Thyroid gland (tissue), 4 donors: ENCODE measurements at regions of chr11 and their contacts with region 1.

Region 1: GRCh38 chr11:102007567-102008437 is 39.4 kb upstream of the CFAP300 start:
- DNase-seq: peak; percentile 57 to 58
- H3K4me3 ChIP-seq: no peak overlapping the region
- H3K27ac ChIP-seq: peak overlapping the region; percentile 47 to 69 (median 57)
- H3K4me1 ChIP-seq: peaks cover 3 to 18% of the 10 kb centered on the region in 2 donors
- H3K27me3 ChIP-seq: no peaks in the 10 kb centered on the region
- CTCF ChIP-seq: peak in 5 of 6 experiments; percentile 19 to 72 (median 58)
- POLR2A ChIP-seq: no peak

Region 2: DNA sequence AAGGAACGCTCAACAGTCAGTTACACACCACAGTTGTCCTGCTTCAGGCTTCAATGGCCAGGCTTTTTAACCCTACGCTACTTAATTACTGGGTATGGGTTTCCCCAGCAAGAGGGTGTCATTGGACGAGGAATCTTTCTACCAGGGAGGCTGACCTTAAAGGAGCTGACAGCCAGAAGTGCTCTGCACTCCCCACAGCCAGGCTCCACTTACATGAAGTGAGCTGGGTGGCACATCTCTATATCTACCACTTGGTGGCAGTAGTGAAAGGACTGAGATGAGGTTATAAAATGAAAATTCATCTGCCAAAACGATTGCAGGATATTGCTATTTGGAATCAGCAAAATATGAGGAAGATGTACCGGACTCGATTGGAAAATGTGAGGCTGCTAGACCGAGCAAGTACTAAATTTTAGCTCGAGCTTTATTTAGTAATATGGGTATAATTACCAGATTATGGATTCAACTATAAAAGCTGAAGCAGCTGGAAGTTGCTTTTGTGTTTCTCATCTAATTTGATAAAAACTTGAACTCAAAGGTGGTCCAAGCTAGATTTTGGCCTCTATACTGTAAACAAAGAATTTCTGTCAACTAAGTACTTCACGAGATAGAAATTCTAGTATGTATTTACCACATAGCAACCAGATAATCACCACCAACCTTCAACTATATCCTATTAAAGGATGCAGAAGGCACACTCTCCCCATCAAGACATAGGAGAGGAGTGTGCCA is 146.9 kb before region 1 on chr11:
- intact Hi-C with region 1: loop called (anchors 5 kb)
- DNase-seq: peak; percentile 40 to 42
- H3K4me3 ChIP-seq: no peak overlapping the region
- H3K27ac ChIP-seq: no peak overlapping the region
- H3K4me1 ChIP-seq: no peaks in the 10 kb centered on the region
- H3K27me3 ChIP-seq: no peaks in the 10 kb centered on the region
- CTCF ChIP-seq: peak in 5 of 6 experiments; percentile 42 to 81 (median 64)
- POLR2A ChIP-seq: no peak

Region 3: DNA sequence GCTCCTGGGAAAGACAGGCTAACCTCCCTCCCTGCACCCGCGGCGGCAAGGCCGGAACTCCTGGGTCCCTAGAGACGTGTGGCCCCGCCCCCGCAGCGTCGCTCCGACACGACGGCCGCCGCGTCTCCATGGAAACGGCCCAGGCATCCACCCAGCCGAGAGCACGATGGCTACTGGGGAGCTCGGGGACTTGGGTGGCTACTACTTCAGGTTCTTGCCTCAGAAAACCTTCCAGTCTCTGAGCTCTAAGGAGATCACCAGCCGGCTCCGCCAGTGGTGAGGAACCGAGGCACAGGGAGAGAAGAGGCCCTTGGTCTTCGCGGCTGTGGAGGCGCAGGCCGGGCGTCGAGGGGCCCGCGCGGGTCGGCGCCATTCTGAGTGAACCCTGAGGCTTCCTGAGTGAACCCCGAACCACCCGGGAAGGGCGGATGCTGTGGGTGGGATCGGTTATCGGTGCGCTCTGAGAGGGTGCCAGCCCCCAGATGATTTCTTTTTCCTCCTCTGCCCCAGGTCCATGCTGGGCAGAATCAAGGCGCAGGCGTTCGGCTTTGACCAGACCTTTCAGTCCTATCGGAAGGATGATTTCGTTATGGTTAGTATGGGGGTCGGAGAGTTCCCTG is 39.6 kb after region 1 on chr11 and contains the start of gene CFAP300:
- intact Hi-C with region 1: no loop called
- DNase-seq: peak; percentile 77 to 80
- H3K4me3 ChIP-seq: peak within 1 kb of the TSS; percentile 7 to 55 (median 42)
- H3K27ac ChIP-seq: peak within 1 kb of the TSS in 2 of 3 donors; percentile 23 to 43
- H3K4me1 ChIP-seq: no peaks in the 10 kb centered on the region
- H3K27me3 ChIP-seq: no peaks in the 10 kb centered on the region
- CTCF ChIP-seq: no peak
- POLR2A ChIP-seq: peak in 1 of 2 donors; percentile 27
- total RNA-seq, gene CFAP300: 1.5 to 5.9 (median 1.6) TPM in 3 of 4 donors, not detected in the other